T-cell (primary cell): ENCODE measurements at regions of chr13 and their contacts with region 1.

Region 1: GRCh38 chr13:108377646-108378206 is 108.2 kb downstream of the TNFSF13B start:
- DNase-seq: no peak
- ATAC-seq: no peak
- H3K4me3 ChIP-seq: no peak overlapping the region
- H3K4me3 Mint-ChIP-seq: no peak overlapping the region
- H3K27ac ChIP-seq: no peak overlapping the region
- H3K27ac Mint-ChIP-seq: no peak overlapping the region
- H3K4me1 ChIP-seq: no peaks in the 10 kb centered on the region
- H3K4me1 Mint-ChIP-seq: no peaks in the 10 kb centered on the region
- H3K27me3 ChIP-seq: peaks cover 0 to 5% of the 10 kb centered on the region in 2 experiments
- H3K27me3 Mint-ChIP-seq: peaks cover 0 to 3% of the 10 kb centered on the region in 2 donors

Region 2: GRCh38 chr13:107217251-107217650 is 1160.5 kb before region 1 on chr13:
- CTCF ChIA-PET with region 1: no interaction called
- POLR2A ChIA-PET with region 1: interaction called in 1 of 2 experiments, 10 read pairs
- DNase-seq: no peak
- ATAC-seq: no peak
- H3K4me3 ChIP-seq: no peak overlapping the region
- H3K4me3 Mint-ChIP-seq: no peak overlapping the region
- H3K27ac ChIP-seq: no peak overlapping the region
- H3K27ac Mint-ChIP-seq: no peak overlapping the region
- H3K4me1 ChIP-seq: no peaks in the 10 kb centered on the region
- H3K4me1 Mint-ChIP-seq: no peaks in the 10 kb centered on the region
- H3K27me3 ChIP-seq: peaks cover 0 to 3% of the 10 kb centered on the region in 2 experiments
- H3K27me3 Mint-ChIP-seq: peaks cover 0 to 3% of the 10 kb centered on the region in 2 donors

Region 3: DNA sequence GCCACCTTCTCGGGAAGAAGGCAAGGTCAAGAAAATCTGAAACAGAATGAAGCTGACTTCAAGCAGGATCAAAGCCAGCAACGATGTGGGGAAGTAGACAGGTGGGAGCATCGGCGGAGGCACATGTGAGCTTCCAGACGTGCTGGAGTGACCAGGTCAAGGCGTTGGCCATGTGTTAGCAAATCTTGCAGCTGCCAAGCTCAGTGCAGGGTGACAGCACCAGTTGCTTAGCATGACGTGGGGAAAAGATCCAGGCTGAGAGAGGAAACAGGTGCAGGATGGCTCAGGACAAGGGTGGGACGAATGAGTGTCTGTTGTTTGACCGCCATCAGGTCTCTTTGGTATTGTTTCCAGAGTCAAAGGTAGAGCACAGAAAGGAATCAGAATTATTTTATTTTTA is 16.0 kb before region 1 on chr13:
- CTCF ChIA-PET with region 1: no interaction called
- POLR2A ChIA-PET with region 1: no interaction called
- DNase-seq: no peak
- ATAC-seq: no peak
- H3K4me3 ChIP-seq: no peak overlapping the region
- H3K4me3 Mint-ChIP-seq: no peak overlapping the region
- H3K27ac ChIP-seq: no peak overlapping the region
- H3K27ac Mint-ChIP-seq: no peak overlapping the region
- H3K4me1 ChIP-seq: no peaks in the 10 kb centered on the region
- H3K4me1 Mint-ChIP-seq: peaks cover 0 to 3% (median 2%) of the 10 kb centered on the region in 3 donors
- H3K27me3 ChIP-seq: no peaks in the 10 kb centered on the region
- H3K27me3 Mint-ChIP-seq: peaks cover 3 to 8% of the 10 kb centered on the region in 2 donors